Endothelial cell of umbilical vein (primary cell): ENCODE measurements at regions of chr6 and their contacts with region 1.

Region 1: DNA sequence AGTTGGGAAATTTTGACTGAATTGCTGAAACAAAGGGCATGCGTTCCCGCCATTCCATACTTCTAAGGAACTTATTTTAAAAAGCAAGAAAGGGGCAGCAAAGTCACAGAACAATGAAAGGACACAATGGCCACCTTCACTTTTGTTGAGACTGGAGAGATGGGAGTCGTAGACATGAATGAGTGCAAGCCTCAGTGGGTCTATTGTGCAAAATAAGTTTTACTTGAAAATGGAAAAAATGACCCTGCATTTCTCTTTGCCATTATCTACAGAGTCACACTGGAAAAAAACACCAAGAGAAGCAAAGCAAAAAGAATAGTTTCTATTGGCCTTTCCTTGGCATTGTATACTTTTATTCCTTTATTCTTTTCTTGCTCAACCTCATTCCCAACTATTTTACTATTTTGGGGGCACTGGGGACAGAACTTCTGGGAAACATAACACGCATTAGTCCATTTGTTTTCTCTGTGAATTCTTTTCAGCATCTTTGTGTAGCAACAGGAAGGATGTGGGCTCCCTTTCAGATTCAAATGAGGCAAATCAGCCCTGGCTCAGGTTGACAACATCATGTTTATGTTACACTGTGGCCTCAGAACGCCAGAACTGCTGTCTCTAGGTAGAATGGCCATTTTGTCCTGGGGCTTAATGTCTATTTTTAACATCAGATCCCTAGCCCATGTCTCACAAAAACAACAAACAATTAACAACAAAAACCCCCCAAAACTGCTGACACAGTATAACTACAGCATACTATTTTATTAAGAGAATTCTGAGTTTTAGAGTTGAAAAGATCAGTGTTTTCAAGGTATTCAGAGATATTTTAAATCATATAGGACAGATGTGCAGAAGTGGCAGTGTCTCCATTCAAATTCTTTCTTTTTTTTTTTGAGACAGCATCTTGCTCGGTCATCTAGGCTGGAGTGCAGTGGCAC is 122.2 kb downstream of the FYN start:
- DNase-seq: peak; percentile 83
- H3K4me3 ChIP-seq: no peak overlapping the region
- H3K27ac ChIP-seq: peak overlapping the region; percentile 75
- H3K4me1 ChIP-seq: peaks cover 83% of the 10 kb centered on the region
- H3K27me3 ChIP-seq: no peaks in the 10 kb centered on the region
- CTCF ChIP-seq: no peak
- POLR2A ChIP-seq: no peak

Region 2: GRCh38 chr6:111692327-111693164 is 58.5 kb before region 1 on chr6:
- CTCF ChIA-PET with region 1: no interaction called
- POLR2A ChIA-PET with region 1: no interaction called
- dilution Hi-C with region 1: no loop called
- intact Hi-C with region 1: no loop called
- DNase-seq: no peak
- H3K4me3 ChIP-seq: no peak overlapping the region
- H3K27ac ChIP-seq: no peak overlapping the region
- H3K4me1 ChIP-seq: peaks cover 8% of the 10 kb centered on the region
- H3K27me3 ChIP-seq: no peaks in the 10 kb centered on the region
- CTCF ChIP-seq: no peak
- POLR2A ChIP-seq: no peak

Region 3: DNA sequence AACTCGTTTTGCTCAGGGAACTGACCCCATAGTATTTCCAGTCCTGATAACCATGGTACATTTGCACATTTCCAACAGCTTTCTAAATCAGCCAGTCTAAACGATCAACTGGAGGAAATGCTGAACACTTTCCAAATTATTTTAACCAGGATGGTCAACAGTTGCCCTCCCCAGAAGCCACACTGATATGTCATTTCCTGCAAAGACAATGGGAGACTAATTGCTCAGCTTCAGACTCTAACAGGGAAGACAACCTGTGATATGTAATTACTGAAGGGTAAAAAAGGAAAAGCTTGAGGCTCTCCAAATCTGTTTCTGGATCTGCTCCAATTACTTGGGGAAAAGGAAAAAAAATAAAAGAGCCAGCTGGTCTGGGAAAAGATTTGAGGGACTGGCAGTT is 33.4 kb after region 1 on chr6:
- CTCF ChIA-PET with region 1: interaction called, 3 read pairs
- POLR2A ChIA-PET with region 1: no interaction called
- dilution Hi-C with region 1: no loop called
- intact Hi-C with region 1: loop called (anchors 1 kb)
- DNase-seq: peak; percentile 88
- H3K4me3 ChIP-seq: peak overlapping the region in 1 of 3 experiments; percentile 18
- H3K27ac ChIP-seq: peak overlapping the region; percentile 29
- H3K4me1 ChIP-seq: peaks cover 20% of the 10 kb centered on the region
- H3K27me3 ChIP-seq: no peaks in the 10 kb centered on the region
- CTCF ChIP-seq: no peak
- POLR2A ChIP-seq: no peak

Region 4: DNA sequence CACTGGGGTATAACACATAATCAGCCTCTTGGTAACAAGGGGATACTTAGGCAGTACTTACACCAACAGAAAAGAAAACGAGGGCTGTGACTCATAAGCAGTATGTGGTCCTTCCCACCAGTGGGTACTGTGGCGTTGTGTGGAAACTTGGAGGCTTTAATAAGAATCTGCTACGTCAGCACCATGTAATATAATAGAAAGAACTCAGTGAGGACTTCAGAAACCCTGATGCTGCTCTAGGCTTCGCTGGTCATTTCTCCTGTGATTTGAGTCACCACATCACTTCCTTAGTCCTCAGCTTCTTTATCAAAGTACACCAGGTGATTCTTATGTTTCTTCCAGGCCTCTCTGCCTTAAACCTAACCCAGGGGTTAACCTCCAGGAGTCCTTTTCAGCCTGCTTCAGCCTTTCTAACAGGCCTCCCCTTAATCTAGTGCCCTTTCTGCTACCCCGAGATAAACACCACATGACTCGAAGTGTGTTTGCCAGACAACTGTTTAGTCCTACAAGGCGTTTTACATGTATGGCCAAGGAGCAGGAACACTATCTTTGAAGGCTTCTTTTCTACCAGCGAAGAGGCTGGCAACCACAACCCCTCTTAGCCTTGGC is 53.7 kb after region 1 on chr6:
- CTCF ChIA-PET with region 1: interaction called, 3 read pairs
- POLR2A ChIA-PET with region 1: no interaction called
- dilution Hi-C with region 1: no loop called
- intact Hi-C with region 1: loop called (anchors 2 kb)
- DNase-seq: peak; percentile 81
- H3K4me3 ChIP-seq: no peak overlapping the region
- H3K27ac ChIP-seq: peak overlapping the region; percentile 56
- H3K4me1 ChIP-seq: peaks cover 39% of the 10 kb centered on the region
- H3K27me3 ChIP-seq: no peaks in the 10 kb centered on the region
- CTCF ChIP-seq: no peak
- POLR2A ChIP-seq: no peak

Region 5: DNA sequence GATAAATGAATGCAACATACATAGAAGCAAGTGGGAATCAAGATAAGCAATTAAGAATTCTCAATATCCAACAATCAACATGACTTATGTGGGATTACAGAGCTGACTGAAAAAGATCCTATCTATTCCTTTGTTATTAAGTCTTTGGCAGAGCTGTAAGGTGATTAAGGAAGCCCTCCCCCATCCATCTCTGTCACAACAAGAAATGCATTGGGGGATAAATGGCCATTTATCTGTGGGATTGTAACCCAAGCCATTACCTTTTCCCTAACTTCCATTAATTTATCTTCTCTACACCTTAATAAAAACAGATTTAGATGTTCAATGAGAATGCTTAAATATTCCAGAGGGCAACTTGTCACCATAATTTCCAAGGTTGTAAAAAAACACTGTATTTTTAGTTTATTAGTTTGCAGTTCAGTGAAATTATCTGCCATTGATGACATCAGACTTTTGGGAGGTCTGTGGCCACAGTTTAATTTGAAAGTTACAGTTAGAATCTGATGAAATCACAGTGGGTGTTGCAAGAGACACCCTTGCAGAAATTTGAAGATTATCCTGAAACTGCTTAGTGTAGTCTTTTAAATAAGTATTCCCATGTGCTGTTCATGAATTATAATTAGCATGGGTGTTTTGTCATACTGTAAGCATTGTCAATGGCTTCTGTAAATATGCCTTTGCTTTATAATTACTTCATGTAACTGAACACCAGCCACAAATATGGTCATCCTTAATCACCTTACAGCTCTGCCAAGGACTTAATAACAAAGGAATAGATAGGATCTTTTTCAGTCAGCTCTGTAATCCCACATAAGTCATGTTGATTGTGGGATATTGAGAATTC is 171.7 kb after region 1 on chr6:
- CTCF ChIA-PET with region 1: no interaction called
- POLR2A ChIA-PET with region 1: no interaction called
- dilution Hi-C with region 1: no loop called
- intact Hi-C with region 1: no loop called
- DNase-seq: no peak
- H3K4me3 ChIP-seq: no peak overlapping the region
- H3K27ac ChIP-seq: no peak overlapping the region
- H3K4me1 ChIP-seq: peaks cover 7% of the 10 kb centered on the region
- H3K27me3 ChIP-seq: no peaks in the 10 kb centered on the region
- CTCF ChIP-seq: no peak
- POLR2A ChIP-seq: no peak